ENCODE measurements at regions of chr17 and their contacts with region 1.

Region 1: DNA sequence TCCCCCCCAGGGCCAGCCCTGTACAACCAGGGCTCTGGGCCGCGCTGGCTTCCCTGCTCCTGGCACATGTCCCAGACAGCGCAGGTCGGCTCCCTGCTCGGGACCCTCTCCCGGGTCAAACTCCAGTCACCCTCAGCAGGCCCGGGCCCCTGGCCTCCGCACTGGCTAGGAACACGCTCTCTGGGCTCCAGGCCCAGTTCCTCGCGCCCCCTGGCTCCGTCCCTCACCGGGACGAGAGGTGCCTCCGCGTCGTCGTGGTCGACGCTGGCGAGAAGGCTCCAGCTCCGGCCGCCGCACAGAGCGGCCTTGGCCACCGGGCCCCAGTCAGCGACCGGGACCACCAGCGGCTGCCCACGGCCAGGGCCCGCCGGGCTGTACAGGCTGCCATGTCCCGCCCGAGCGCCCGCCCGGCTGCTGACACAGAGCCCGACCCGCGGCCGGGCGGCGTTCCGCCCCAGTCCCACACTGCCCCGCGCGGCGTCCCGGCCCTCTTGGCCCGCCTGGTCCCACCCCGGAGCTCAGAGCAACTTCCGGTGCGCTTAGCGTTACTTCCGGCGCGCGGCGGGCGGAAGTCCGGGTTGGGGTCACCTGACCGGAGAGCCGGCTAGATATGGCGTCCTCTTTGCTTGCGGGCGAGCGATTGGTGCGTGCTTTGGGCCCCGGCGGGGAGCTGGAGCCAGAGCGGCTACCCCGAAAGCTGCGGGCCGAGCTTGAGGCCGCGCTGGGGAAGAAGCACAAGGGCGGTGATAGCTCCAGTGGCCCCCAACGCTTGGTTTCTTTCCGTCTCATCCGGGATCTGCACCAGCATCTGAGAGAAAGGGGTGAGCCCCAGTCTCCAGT is at the start of gene POLDIP2:
- DNase-seq: peak; percentile 99 to 100
- H3K4me3 ChIP-seq: peak within 1 kb of the TSS; percentile 78
- H3K4me3 Mint-ChIP-seq: peak within 1 kb of the TSS; percentile 90
- H3K27ac Mint-ChIP-seq: peak within 1 kb of the TSS; percentile 96
- H3K4me1 ChIP-seq: peaks cover 15% of the 10 kb centered on the region
- H3K4me1 Mint-ChIP-seq: peaks cover 22% of the 10 kb centered on the region
- H3K27me3 ChIP-seq: no peaks in the 10 kb centered on the region
- H3K27me3 Mint-ChIP-seq: no peaks in the 10 kb centered on the region
- CTCF ChIP-seq: peak in 1 of 2 experiments; percentile 15
- total RNA-seq, gene POLDIP2: 257 and 265 TPM in 2 replicates

Region 2: GRCh38 chr17:28346746-28347246 is 10.5 kb before region 1 on chr17:
- CTCF ChIA-PET with region 1: interaction called, 12 read pairs
- POLR2A ChIA-PET with region 1: interaction called, 11 read pairs
- intact Hi-C with region 1: no loop called
- DNase-seq: peak; percentile 70 to 72
- H3K4me3 ChIP-seq: no peak overlapping the region
- H3K4me3 Mint-ChIP-seq: no peak overlapping the region
- H3K27ac Mint-ChIP-seq: peak overlapping the region; percentile 1
- H3K4me1 ChIP-seq: peaks cover 22% of the 10 kb centered on the region
- H3K4me1 Mint-ChIP-seq: peaks cover 8% of the 10 kb centered on the region
- H3K27me3 ChIP-seq: no peaks in the 10 kb centered on the region
- H3K27me3 Mint-ChIP-seq: no peaks in the 10 kb centered on the region
- CTCF ChIP-seq: peak; percentile 48 to 66

Region 3: DNA sequence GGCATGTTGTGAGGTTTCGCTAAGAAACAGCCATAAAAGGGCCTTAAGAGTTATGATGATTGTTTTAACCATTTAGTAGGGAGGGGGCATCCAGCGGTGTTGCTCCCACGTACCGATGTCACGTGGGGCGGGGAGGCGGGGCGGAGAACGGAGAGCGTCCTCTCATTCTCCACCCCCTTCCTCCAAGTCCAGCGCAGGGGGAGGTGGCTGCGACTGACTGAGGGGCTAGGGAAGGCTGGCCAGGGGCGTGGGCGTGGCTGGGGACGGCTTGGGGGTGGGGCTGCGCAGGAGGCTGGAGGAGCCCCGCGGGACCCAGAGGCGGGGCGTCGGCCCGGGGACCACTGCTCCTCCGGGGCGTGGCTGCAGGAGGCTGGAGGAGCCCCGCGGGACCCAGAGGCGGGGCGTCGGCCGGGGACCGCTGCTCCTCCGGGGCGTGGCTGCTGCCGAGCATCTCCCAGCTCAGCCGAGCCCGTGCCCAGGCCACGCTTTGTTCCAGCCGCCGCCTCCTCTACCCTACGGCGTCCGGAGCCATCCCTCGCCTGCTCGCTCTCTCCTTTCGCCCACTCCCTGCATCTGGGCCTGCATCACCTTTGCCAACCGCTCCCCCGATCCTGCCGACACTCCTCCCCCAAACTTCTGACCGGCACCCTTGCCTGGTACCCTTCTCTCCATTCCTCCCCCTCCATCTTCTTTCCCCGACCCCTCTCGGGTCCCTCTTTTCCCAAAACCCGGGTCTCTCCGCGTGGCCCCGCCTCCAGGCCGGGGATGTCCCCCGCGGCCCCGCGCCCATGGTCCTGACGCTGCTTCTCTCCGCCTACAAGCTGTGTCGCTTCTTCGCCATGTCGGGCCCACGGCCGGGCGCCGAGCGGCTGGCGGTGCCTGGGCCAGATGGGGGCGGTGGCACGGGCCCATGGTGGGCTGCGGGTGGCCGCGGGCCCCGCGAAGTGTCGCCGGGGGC is 14.2 kb after region 1 on chr17 and contains the start of gene SARM1:
- CTCF ChIA-PET with region 1: interaction called, 45 read pairs
- POLR2A ChIA-PET with region 1: interaction called, 74 read pairs
- intact Hi-C with region 1: loop called (anchors 1 kb)
- DNase-seq: peak; percentile 99 to 100
- H3K4me3 ChIP-seq: peak within 1 kb of the TSS; percentile 40
- H3K4me3 Mint-ChIP-seq: peak within 1 kb of the TSS; percentile 75
- H3K27ac Mint-ChIP-seq: peak within 1 kb of the TSS; percentile 88
- H3K4me1 ChIP-seq: peaks cover 46% of the 10 kb centered on the region
- H3K4me1 Mint-ChIP-seq: peaks cover 54% of the 10 kb centered on the region
- H3K27me3 ChIP-seq: no peaks in the 10 kb centered on the region
- H3K27me3 Mint-ChIP-seq: no peaks in the 10 kb centered on the region
- CTCF ChIP-seq: no peak
- total RNA-seq, gene SARM1: 32.8 and 34.4 TPM in 2 replicates

Region 4: DNA sequence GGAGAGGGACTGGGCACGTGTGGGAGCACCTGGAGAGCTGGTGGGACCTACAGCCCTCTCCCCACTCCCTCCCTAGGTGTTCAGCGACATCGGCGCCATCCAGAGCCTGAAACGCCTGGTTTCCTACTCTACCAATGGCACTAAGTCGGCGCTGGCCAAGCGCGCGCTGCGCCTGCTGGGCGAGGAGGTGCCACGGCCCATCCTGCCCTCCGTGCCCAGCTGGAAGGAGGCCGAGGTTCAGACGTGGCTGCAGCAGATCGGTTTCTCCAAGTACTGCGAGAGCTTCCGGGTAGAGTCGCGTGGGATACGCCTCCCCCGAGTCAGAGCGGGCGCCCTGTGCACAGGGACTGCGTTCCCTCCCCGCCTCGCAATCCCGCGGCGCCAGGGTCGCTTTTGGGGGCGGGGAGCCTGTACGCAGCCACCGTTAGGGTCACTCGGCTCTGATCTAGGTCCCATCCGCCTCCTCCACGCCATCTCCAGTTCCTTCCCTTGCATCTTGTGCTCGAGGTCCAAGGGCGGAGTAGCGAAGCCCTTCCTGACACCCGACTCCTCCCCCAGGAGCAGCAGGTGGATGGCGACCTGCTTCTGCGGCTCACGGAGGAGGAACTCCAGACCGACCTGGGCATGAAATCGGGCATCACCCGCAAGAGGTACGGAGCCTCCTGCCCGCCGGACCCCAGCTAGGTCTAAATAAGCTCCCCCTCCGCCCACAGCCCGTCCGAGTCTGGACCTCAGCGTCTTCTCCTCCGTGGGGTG is 27.2 kb after region 1 on chr17:
- CTCF ChIA-PET with region 1: no interaction called
- POLR2A ChIA-PET with region 1: interaction called, 18 read pairs
- intact Hi-C with region 1: loop called (anchors 2 kb)
- DNase-seq: peak; percentile 83 to 86
- H3K4me3 ChIP-seq: peak overlapping the region; percentile 52
- H3K4me3 Mint-ChIP-seq: peak overlapping the region; percentile 89
- H3K27ac Mint-ChIP-seq: peak overlapping the region; percentile 18
- H3K4me1 ChIP-seq: peaks cover 31% of the 10 kb centered on the region
- H3K4me1 Mint-ChIP-seq: peaks cover 17% of the 10 kb centered on the region
- H3K27me3 ChIP-seq: no peaks in the 10 kb centered on the region
- H3K27me3 Mint-ChIP-seq: no peaks in the 10 kb centered on the region
- CTCF ChIP-seq: no peak

Region 5: GRCh38 chr17:28390984-28391800 is 33.9 kb after region 1 on chr17:
- CTCF ChIA-PET with region 1: no interaction called
- POLR2A ChIA-PET with region 1: interaction called, 21 read pairs
- intact Hi-C with region 1: no loop called
- DNase-seq: no peak
- H3K4me3 ChIP-seq: no peak overlapping the region
- H3K4me3 Mint-ChIP-seq: no peak overlapping the region
- H3K27ac Mint-ChIP-seq: peak overlapping the region; percentile 56
- H3K4me1 ChIP-seq: peaks cover 61% of the 10 kb centered on the region
- H3K4me1 Mint-ChIP-seq: peaks cover 50% of the 10 kb centered on the region
- H3K27me3 ChIP-seq: no peaks in the 10 kb centered on the region
- H3K27me3 Mint-ChIP-seq: no peaks in the 10 kb centered on the region
- CTCF ChIP-seq: no peak

Region 6: GRCh38 chr17:28405632-28406472 is 48.6 kb after region 1 on chr17 and contains the start of gene SLC46A1:
- CTCF ChIA-PET with region 1: no interaction called
- POLR2A ChIA-PET with region 1: interaction called, 18 read pairs
- intact Hi-C with region 1: loop called (anchors 1 kb)
- DNase-seq: peak; percentile 96 to 97
- H3K4me3 ChIP-seq: peak within 1 kb of the TSS; percentile 78
- H3K4me3 Mint-ChIP-seq: peak within 1 kb of the TSS; percentile 90
- H3K27ac Mint-ChIP-seq: peak within 1 kb of the TSS; percentile 72
- H3K4me1 ChIP-seq: peaks cover 56% of the 10 kb centered on the region
- H3K4me1 Mint-ChIP-seq: peaks cover 31% of the 10 kb centered on the region
- H3K27me3 ChIP-seq: no peaks in the 10 kb centered on the region
- H3K27me3 Mint-ChIP-seq: no peaks in the 10 kb centered on the region
- CTCF ChIP-seq: no peak
- total RNA-seq, gene SLC46A1: 114 and 128 TPM in 2 replicates

Measured in Caco-2 (cell line).